Posterior cingulate gyrus (tissue), 11 donors: ENCODE measurements at regions of chr12 and their contacts with region 1.

Region 1: GRCh38 chr12:106223485-106224354 is 24.1 kb downstream of the CKAP4 start:
- DNase-seq: peak in 8 of 10 donors; percentile 49 to 95 (median 72)

Region 2: DNA sequence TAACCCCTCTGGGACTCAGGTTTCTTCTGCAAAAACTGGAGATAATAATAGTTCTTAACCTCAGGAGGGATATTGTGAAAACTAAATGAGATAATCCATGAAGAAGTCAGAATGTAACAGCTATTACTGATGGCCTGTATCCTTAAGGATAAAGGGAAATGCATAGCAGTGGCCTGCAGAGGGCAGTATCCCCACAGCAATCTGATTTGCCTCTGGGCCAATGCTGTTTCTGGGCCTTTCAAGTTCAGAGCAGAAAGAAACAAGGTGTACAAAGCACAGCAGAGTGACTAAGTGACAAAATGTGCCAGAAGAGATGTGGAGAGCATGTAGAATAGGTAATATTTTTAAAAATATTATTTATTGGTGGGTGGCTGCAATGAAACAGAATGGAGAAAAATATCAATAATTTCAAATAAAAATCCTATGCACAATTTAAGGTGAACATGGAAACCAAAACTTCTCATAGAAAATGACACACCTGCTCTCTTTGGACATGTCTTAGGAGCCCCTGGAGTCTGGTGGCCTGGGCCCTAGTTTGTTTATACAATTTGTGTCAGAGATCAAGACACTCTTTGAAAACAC is 803.0 kb before region 1 on chr12:
- intact Hi-C with region 1: loop called (anchors 2 kb)
- DNase-seq: peak in 9 of 10 donors; percentile 48 to 96 (median 78)

Region 3: GRCh38 chr12:106149096-106149784 is 74.5 kb before region 1 on chr12:
- intact Hi-C with region 1: loop called (anchors 5 kb)
- DNase-seq: peak in 4 of 10 donors; percentile 24 to 86 (median 37)

Region 4: GRCh38 chr12:106267535-106267934 is 43.8 kb after region 1 on chr12:
- intact Hi-C with region 1: no loop called
- DNase-seq: no peak

Region 5: GRCh38 chr12:106282457-106283097 is 58.9 kb after region 1 on chr12:
- intact Hi-C with region 1: loop called (anchors 2 kb)
- DNase-seq: no peak

Region 6: GRCh38 chr12:106302401-106303201 is 78.9 kb after region 1 on chr12 and contains the start of gene TCP11L2:
- intact Hi-C with region 1: loop called (anchors 5 kb)
- DNase-seq: peak; percentile 79 to 98 (median 88)

Region 7: DNA sequence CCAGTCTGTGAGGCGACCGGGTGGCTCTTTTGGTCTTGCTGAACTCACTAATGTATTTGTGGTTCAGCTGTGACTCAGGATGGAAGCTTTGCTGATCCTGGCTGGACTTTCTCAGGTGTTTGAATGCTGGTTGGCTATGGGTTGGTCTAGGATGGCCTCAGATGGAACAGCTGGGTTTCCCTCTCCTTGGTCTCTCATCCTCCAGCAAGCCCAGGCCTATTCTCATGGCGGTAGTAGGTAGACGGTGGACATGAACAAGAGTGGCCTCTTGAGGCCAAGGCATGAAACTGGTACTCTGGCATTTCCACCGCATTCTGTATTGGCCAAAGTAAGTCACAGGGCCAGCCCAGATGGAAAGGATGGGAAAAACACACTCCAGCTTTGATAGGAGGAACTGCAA is 122.0 kb after region 1 on chr12:
- intact Hi-C with region 1: loop called (anchors 5 kb)
- DNase-seq: peak in 4 of 10 donors; percentile 23 to 55 (median 31)

Region 8: DNA sequence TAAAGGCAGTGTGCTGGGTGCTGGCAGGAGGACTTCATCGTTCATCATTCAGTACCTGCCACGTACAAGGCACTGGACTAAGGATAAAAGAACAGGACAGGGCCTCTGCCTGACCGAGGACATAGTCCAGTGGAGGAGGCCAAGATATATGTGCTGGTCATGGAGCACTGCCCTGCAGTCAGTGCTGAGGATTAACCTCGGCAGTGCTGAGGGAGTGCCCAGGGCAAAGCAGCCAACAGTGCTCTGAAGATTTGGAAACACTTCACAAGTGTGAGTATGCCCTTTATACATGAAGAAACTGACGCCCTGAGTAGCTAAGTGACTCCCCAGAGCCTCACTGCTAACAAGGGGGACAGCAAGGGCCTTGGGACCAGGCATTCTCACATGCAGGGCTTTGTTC is 287.6 kb after region 1 on chr12:
- intact Hi-C with region 1: no loop called
- DNase-seq: no peak